WTC11 (cell line): ENCODE measurements at regions of chr11 and their contacts with region 1.

Region 1: DNA sequence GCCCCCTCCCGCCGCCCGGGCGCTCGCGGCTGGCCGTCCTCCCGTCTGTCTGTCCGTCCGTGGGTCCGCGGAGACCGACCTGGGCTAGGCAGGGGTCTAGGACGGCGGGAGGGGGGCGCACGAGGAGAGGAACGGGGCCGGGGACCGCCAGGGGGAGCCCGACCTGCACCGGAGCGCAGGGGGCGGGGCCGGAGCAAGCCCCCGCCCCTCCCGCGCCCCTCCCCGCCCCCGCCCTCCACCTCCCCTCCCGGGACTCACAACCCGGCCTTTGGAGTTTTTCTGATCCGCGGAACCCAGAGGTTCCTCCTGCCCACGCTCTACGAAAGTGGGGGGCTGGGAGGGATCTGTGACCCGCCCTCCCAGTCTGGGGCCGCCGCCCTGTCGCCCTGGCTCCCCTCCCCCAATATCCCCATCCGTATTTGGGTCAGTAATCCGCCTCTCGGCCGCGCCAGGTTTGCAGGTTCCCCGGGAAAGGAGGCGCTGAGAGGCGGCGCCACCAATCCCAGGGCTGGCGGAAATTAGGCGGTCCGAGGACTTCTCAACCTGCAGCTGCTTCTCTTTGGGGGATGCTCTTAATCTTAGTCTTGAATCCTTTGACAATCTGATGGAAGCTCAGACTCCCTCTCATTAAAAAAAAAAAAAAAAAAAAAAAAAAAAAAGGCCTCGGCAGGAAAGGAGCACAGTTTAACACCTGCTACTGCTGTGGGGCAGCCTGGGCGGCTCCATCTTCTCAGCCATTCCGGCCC is 925 bp upstream of the KCNJ11 start:
- DNase-seq: peak; percentile 84
- ATAC-seq: peak; percentile 69
- H3K4me3 Mint-ChIP-seq: peak overlapping the region; percentile 67
- H3K27ac Mint-ChIP-seq: no peak overlapping the region
- H3K4me1 Mint-ChIP-seq: peaks cover 6% of the 10 kb centered on the region
- H3K27me3 Mint-ChIP-seq: peaks cover 20% of the 10 kb centered on the region
- CTCF ChIP-seq: peak; percentile 77

Region 2: GRCh38 chr11:17400048-17400775 is 10.8 kb after region 1 on chr11:
- CTCF ChIA-PET with region 1: interaction called, 27 read pairs
- POLR2A ChIA-PET with region 1: no interaction called
- DNase-seq: no peak
- ATAC-seq: no peak
- H3K4me3 Mint-ChIP-seq: no peak overlapping the region
- H3K27ac Mint-ChIP-seq: no peak overlapping the region
- H3K4me1 Mint-ChIP-seq: no peaks in the 10 kb centered on the region
- H3K27me3 Mint-ChIP-seq: no peaks in the 10 kb centered on the region
- CTCF ChIP-seq: no peak

Region 3: DNA sequence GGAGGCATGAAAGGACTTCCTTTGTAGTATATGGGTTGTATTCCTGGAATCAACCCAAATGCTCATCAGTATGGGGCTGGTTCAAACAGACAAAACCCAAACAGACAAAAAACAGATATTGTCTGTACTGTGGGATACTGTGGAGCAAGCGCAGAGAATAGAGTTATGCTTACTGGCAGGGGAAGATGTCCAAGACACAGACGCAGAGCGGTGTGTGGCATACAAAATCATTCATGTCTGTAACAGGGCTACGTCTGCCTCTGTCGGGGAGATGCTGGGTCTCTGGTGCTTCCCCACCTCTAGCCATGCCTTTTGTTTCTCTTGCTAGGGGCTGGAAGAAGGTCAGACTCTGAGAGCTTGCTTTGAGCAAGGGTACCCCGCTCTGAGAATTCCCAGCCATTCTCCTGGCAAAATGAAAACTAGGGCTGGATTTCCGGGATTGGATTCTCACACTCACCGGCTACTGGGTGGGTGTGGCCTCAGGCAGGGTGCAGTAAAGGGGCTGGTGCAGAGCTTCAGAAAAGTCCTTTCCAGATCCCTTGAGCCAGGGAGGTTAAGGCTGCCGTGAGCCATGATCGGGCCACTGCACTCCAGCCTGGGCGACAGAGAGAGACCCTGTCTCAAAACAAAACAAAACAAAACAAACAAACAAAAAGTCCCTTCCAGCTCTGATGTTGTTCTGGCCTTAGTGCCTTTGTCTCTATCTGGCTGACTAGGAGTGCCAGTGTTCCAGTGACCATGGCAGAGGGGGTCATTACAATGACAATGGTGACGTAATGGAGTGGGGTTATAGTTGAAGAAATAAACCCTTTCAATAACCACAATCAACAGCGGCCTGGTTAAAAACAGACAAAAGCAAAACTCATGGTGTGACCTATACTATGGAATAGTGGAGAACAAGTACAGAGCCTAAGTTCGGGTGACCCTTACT is 90.2 kb after region 1 on chr11:
- CTCF ChIA-PET with region 1: interaction called, 56 read pairs
- POLR2A ChIA-PET with region 1: interaction called, 3 read pairs
- DNase-seq: peak; percentile 74
- ATAC-seq: peak; percentile 71
- H3K4me3 Mint-ChIP-seq: no peak overlapping the region
- H3K27ac Mint-ChIP-seq: no peak overlapping the region
- H3K4me1 Mint-ChIP-seq: peaks cover 19% of the 10 kb centered on the region
- H3K27me3 Mint-ChIP-seq: peaks cover 52% of the 10 kb centered on the region
- CTCF ChIP-seq: no peak

Region 4: DNA sequence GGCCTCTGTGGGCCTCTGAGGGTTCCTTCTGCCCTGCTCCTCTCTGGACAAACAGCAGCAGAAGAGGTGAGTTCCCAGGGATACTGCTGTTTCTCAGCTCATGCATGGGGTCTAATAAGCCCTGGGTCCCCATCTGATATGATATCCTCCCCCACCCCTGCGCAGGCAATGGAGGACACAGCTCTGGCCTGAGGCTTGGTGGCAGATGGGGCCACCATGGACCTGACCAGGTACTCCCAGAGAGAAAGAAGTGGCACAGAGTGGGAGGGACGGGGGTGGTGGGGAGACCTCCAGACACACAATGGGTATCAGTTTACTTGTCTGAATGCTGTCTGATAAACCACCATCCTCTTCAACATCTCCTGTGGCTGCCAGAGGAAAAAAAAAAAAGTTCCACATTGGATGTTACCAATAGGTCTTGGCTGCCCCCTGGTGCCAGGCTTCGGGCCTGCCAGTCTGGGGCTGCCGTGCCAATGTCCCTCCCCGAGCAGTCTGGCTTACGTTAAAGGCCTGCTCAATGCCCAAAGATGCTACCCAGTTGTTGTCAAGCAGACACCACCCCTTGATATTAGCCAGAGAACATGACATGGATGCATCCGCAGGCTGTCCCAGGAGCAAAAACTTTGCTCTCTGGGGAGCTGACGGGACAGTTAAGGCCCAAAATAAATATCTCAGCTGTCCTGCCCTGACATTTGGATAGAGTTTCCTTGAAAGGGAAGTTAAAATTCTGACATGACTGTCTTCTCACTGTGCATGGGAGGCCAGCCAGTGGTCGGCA is 115.1 kb after region 1 on chr11:
- CTCF ChIA-PET with region 1: interaction called, 47 read pairs
- POLR2A ChIA-PET with region 1: interaction called, 3 read pairs
- DNase-seq: peak; percentile 84
- ATAC-seq: peak; percentile 86
- H3K4me3 Mint-ChIP-seq: no peak overlapping the region
- H3K27ac Mint-ChIP-seq: no peak overlapping the region
- H3K4me1 Mint-ChIP-seq: no peaks in the 10 kb centered on the region
- H3K27me3 Mint-ChIP-seq: peaks cover 2% of the 10 kb centered on the region; the same call in 1 of the 2 replicates
- CTCF ChIP-seq: peak; percentile 85

Region 5: GRCh38 chr11:17544181-17544622 is 154.8 kb after region 1 on chr11 and contains the start of gene USH1C:
- CTCF ChIA-PET with region 1: interaction called, 11 read pairs
- POLR2A ChIA-PET with region 1: no interaction called
- DNase-seq: peak; percentile 79
- ATAC-seq: peak; percentile 57
- H3K4me3 Mint-ChIP-seq: peak within 1 kb of the TSS; percentile 72
- H3K27ac Mint-ChIP-seq: 0 out of 2 replicates have a peak within 1 kb of the TSS, but pooled peaks have one; percentile 30
- H3K4me1 Mint-ChIP-seq: peaks cover 49% of the 10 kb centered on the region
- H3K27me3 Mint-ChIP-seq: peaks cover 36% of the 10 kb centered on the region
- CTCF ChIP-seq: no peak
- total RNA-seq, gene USH1C: 3.3 to 3.9 TPM (median 3.7 TPM) in 3 replicates